ENCODE measurements at regions of chr2 and their contacts with region 1.

Region 1: DNA sequence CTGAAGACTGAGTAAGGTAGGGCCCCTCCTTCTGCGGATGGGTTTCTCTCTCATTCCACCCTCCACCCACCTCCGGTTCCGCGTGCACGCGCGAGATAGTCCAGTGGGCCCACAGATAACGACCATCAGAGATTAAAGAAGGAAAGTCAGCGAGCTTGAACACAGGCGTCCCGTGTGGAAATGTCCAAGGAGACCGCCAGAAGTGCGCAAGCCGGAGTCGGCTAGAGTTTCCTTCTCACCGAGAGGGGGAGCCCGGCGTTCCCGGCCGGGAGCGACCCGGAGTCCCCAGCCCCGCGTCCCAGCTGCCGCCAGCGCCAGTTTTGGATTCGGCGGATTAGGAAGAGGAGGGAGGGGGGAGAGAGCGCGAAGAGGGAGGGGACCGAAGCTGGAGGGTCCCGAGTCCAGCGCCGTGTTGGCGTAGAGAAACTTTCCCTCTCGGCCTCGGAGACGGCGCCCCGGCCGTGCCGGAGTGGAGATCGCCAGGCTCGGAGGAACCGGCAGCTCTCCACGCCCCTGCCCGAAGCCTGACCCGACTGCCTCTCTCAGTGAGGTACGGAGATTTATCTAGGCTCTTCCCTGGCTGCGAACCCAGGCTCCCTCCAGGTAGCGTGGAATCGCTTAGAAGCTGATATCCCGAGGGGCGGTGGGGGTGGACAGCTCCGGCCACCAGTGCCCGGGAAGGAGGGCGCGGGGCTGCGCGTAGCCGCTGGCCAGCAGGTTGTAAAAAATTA is at the start of gene GULP1:
- DNase-seq: peak in 1 of 2 experiments; percentile 84
- H3K4me3 ChIP-seq: peak within 1 kb of the TSS; percentile 85 to 97 (median 94)
- H3K27ac ChIP-seq: peak within 1 kb of the TSS; percentile 95
- H3K4me1 ChIP-seq: no peaks in the 10 kb centered on the region; a peak in 1 of 7 replicates
- H3K27me3 ChIP-seq: no peaks in the 10 kb centered on the region
- CTCF ChIP-seq: peak; percentile 54 to 72 (median 68)
- EP300 ChIP-seq: peak in 1 of 2 experiments; percentile 41; a peak in 1 of 3 replicates
- POLR2A ChIP-seq: no peak; a peak in 1 of 3 replicates
- RAD21 ChIP-seq: peak; percentile 64 to 72
- total RNA-seq, gene GULP1: 130 and 139 TPM in 2 replicates

Region 2: DNA sequence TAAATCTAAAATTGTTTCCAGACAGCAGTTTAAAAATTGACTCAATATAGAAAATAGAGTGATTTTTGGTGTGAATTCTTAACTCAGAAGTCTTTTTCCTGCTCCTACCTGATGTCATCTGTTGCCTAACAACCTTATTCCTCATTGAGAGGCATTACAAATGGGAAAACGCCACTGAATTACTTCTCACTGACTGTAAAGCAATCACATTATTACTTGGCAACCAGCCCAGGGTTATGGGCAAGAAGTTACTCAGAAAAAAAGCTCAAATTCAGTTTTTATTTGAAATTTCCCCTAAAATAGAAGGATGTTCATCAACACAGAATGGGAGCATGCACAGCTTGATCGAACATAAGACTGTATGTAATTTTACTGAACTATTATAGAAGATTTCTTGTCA is 201.9 kb before region 1 on chr2:
- CTCF ChIA-PET with region 1: no interaction called
- POLR2A ChIA-PET with region 1: no interaction called
- DNase-seq: no peak
- H3K4me3 ChIP-seq: no peak overlapping the region
- H3K27ac ChIP-seq: no peak overlapping the region
- H3K4me1 ChIP-seq: no peaks in the 10 kb centered on the region
- H3K27me3 ChIP-seq: no peaks in the 10 kb centered on the region
- CTCF ChIP-seq: no peak
- EP300 ChIP-seq: no peak
- POLR2A ChIP-seq: no peak
- RAD21 ChIP-seq: no peak

Region 3: DNA sequence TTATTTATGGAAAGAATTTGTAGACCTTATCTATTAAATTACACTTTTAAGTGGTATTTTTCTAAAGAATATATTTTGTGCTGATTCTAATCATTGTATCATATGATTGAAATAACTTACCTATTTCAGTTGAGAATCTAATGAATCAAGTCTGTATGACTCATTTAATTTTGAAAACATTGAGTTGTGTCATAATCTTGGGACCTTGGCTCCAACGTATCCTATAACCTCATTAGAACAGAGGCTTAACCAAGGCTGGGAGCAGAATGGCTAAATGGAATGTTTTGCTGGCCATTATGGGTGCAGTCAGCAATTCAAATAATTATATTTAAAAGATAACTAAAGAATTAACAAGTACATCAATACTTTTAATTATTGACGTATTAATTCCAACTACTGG is 19.7 kb before region 1 on chr2:
- CTCF ChIA-PET with region 1: interaction called, 4 read pairs
- POLR2A ChIA-PET with region 1: interaction called, 12 read pairs
- DNase-seq: no peak
- H3K4me3 ChIP-seq: no peak overlapping the region
- H3K27ac ChIP-seq: no peak overlapping the region
- H3K4me1 ChIP-seq: peaks cover 1 to 14% (median 6%) of the 10 kb centered on the region in 4 experiments; a peak in 4 of 7 replicates
- H3K27me3 ChIP-seq: no peaks in the 10 kb centered on the region
- CTCF ChIP-seq: no peak
- EP300 ChIP-seq: no peak
- POLR2A ChIP-seq: no peak
- RAD21 ChIP-seq: no peak

Region 4: DNA sequence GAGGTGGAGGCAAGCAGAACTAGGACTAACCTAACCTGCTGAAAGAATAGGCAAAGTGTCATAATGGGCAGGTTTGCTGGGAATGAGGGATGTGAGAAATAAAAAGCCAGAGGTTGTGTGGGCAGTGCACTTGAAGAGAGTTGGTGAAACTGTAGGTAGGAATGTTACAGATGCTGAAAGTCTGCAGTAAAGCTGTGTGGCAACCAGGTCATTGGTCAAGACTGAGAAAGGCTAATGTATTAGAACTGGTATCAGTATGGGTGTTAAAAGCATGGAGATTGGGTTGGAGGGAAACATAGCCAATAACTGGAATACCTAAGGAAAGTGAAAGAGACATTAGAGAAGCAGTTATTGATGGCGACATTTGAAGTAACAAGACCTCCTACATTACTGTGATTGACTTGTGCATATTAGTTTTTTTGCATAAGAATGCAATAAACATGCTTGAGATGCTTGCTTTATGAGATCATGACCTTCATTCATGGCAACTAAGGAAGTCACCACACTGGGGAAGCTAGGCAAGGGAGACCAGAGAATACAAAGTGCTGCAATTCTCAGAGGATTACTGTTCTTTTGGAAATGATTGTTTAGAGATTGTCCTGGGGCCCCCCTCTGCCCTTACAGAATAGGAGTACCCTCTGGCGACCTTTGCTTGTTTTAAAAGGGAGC is 11.7 kb after region 1 on chr2:
- CTCF ChIA-PET with region 1: interaction called, 26 read pairs
- POLR2A ChIA-PET with region 1: interaction called, 62 read pairs
- DNase-seq: peak in 1 of 2 experiments; percentile 70
- H3K4me3 ChIP-seq: peak overlapping the region in 2 of 4 experiments; percentile 9 to 42; a peak in 2 of 8 replicates
- H3K27ac ChIP-seq: peak overlapping the region; percentile 75
- H3K4me1 ChIP-seq: peaks cover 11 to 42% (median 34%) of the 10 kb centered on the region in 4 experiments
- H3K27me3 ChIP-seq: no peaks in the 10 kb centered on the region
- CTCF ChIP-seq: no peak
- EP300 ChIP-seq: peak in 1 of 2 experiments; percentile 89; a peak in 1 of 3 replicates
- POLR2A ChIP-seq: peak in 1 of 2 experiments; percentile 29; a peak in 2 of 3 replicates
- RAD21 ChIP-seq: peak in 1 of 2 experiments; percentile 9; a peak in 1 of 4 replicates

Region 5: GRCh38 chr2:188333751-188334524 is 42.2 kb after region 1 on chr2:
- CTCF ChIA-PET with region 1: interaction called, 4 read pairs
- POLR2A ChIA-PET with region 1: interaction called, 12 read pairs
- DNase-seq: no peak
- H3K4me3 ChIP-seq: no peak overlapping the region
- H3K27ac ChIP-seq: no peak overlapping the region
- H3K4me1 ChIP-seq: peaks cover 0 to 9% (median 5%) of the 10 kb centered on the region in 4 experiments; a peak in 4 of 7 replicates
- H3K27me3 ChIP-seq: no peaks in the 10 kb centered on the region
- CTCF ChIP-seq: no peak
- EP300 ChIP-seq: no peak
- POLR2A ChIP-seq: no peak
- RAD21 ChIP-seq: no peak

Region 6: GRCh38 chr2:188369365-188369764 is 77.6 kb after region 1 on chr2:
- CTCF ChIA-PET with region 1: interaction called, 16 read pairs
- POLR2A ChIA-PET with region 1: interaction called, 18 read pairs
- DNase-seq: no peak
- H3K4me3 ChIP-seq: no peak overlapping the region
- H3K27ac ChIP-seq: no peak overlapping the region
- H3K4me1 ChIP-seq: peaks cover 0 to 17% (median 3%) of the 10 kb centered on the region in 4 experiments; a peak in 5 of 7 replicates
- H3K27me3 ChIP-seq: no peaks in the 10 kb centered on the region
- CTCF ChIP-seq: peak; percentile 36 to 71 (median 63)
- EP300 ChIP-seq: no peak
- POLR2A ChIP-seq: no peak
- RAD21 ChIP-seq: peak; percentile 58 to 69

Region 7: DNA sequence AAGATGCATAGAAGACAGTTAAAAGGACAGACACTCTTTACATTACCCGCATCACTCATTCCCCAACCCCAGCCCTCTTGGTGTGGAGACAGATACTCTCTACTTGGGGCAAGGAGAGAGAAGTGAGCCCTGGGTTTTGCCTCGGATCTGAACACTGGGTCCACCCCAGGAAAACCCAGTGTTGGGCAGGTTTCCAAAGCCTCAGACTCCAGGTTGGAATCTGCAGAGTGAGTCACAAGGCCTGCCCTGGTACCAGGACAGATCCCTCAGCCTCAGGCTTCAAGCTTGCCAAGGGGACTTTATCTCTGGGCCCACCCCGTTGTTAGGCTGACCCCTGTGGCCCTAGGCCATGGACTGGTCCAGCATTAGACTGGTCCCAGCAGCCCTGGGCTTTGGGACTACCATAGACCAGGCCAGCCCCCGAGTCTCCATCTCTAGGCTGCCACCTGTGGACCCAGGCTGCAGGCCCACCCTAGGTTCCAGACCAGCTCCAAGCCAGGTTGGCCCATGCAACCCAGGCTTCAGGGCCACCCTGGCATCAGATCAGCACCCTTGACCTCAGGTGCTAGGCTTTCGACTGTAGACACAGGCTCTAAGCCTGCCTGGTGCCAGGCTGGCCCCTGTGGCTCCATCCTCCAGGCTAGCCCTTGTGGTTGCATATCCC is 112.7 kb after region 1 on chr2:
- CTCF ChIA-PET with region 1: no interaction called
- POLR2A ChIA-PET with region 1: no interaction called
- DNase-seq: no peak
- H3K4me3 ChIP-seq: no peak overlapping the region
- H3K27ac ChIP-seq: no peak overlapping the region
- H3K4me1 ChIP-seq: peaks cover 0 to under 1% (median 0%) of the 10 kb centered on the region in 4 experiments; a peak in 1 of 7 replicates
- H3K27me3 ChIP-seq: no peaks in the 10 kb centered on the region
- CTCF ChIP-seq: no peak
- EP300 ChIP-seq: no peak
- POLR2A ChIP-seq: peak in 1 of 2 experiments; percentile 8; a peak in 1 of 3 replicates
- RAD21 ChIP-seq: no peak

Measured in H1 (cell line).